HAP-1 (cell line): ENCODE measurements at regions of chr11 and their contacts with region 1.

Region 1: GRCh38 chr11:75248690-75249268 is 8.2 kb downstream of the TPBGL start:
- DNase-seq: peak; percentile 73 to 93
- H3K4me3 ChIP-seq: no peak overlapping the region
- H3K4me1 ChIP-seq: no peaks in the 10 kb centered on the region
- H3K27me3 ChIP-seq: no peaks in the 10 kb centered on the region

Region 2: DNA sequence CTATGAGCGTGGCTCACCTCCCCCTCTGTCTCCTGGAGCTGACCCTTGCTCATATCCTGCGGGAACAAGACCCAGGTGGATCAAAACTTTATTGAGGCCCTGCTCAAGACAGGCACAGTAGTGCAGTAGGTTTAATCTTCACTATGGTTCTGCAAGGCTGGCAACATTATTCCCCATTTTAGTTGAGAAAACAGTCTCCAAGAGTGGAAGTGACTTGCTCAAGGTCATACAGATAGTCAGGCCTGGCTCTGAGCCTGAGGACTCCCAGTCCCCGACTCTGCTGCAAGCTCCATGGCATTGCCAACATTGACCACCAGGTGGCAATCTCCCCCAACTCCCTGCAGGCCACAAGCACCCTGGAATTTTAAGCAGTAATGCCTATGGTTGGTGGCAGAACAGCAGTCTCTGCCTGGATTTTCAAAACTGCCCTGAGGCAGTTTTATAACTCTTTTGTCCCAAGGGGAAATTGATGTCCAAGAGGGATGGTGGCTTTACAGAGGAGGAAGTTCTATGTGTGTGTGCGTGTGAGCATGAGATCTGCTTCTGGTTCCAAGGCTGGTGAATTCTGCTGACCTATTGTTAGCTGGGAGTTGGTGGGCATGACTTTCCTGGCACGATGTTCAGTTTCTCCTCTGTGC is 225.9 kb before region 1 on chr11:
- in situ Hi-C with region 1: loop called (anchors 5 kb)
- DNase-seq: peak; percentile 68 to 88
- H3K4me3 ChIP-seq: no peak overlapping the region
- H3K4me1 ChIP-seq: no peaks in the 10 kb centered on the region
- H3K27me3 ChIP-seq: no peaks in the 10 kb centered on the region

Region 3: DNA sequence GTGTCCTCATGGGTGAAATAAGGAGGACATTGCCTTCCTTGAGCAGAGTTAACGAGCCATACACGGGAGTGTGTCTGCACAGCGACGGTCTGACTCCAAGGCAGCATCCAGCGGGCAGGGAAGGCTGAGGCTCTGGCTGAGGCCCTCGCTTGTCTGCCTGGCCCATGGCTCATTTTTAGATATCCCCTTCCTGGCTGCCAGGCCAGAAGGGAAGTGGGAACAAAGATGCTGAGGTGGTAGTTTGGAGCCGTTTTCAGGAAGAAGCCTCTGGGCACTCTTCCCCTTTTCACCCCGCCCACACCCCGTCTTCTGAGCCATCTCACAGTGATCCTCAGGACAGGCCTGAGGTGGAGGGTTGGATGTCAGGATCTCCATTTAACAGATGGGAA is 100.9 kb before region 1 on chr11:
- in situ Hi-C with region 1: loop called (anchors 5 kb)
- DNase-seq: no peak
- H3K4me3 ChIP-seq: no peak overlapping the region
- H3K4me1 ChIP-seq: no peaks in the 10 kb centered on the region
- H3K27me3 ChIP-seq: peaks cover 6% of the 10 kb centered on the region; the same call in 1 of the 2 replicates

Region 4: DNA sequence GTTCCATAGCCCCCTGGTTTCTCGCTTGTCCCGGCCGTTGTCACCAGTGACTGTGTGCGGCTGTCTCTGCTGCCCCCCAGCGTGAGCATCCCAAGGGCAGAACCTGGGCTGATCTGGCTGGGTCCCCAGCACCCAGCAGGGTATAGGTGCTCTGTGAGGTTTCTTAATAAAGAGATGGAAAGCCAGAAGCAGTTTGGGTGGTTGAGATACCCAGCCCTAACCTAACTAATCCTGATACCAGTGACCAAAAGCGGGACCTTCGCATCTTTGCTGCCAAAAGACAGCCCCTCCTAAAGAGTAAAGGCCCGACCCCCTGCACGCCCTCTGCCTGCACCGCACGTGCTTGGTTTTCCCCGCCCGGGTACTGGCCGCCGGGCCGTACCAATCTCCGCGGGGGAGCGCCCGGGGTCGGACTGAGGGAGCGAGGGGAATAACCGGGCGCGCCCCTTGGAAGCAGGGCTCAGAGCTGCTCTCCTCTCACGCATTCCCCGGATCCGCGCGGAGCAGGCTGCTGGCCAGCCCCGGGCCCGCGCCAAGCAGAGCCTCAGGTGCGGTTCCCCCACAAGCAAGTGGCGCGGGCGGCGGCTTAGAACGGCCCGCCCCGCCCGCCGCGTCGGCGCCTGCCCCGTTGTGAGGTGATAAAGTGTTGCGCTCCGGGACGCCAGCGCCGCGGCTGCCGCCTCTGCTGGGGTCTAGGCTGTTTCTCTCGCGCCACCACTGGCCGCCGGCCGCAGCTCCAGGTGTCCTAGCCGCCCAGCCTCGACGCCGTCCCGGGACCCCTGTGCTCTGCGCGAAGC is 519.5 kb after region 1 on chr11 and contains the start of gene DGAT2:
- in situ Hi-C with region 1: no loop called
- DNase-seq: peak; percentile 76 to 84
- H3K4me3 ChIP-seq: peak within 1 kb of the TSS; percentile 27
- H3K4me1 ChIP-seq: peaks cover 4% of the 10 kb centered on the region; the same call in 1 of the 2 replicates
- H3K27me3 ChIP-seq: no peaks in the 10 kb centered on the region